H1 (cell line): ENCODE measurements at regions of chr19 and their contacts with region 1.

Region 1: DNA sequence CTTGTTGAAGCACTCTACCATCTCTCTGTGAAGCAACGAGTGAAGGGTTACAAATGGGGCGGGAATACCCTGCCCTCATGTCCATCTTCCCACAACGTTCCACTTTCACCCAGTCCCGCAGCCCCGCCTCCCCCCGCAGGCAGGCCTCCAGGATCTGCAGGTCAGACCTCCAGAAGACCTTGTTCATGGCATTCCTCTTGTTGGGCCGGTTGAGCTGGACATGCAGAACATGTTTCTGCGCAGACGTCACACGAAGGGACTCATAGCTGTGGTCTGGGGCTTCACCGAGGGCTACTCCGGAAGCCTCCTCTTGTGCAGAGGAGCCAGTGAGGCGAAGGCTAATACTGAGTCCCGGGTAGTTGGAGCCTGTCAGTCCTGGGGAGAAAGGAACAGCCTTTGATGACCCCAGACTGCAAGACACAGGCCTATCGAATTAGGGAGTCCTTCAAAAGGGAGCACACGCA is 420 bp downstream of the ECH1 start:
- DNase-seq: no peak
- H3K4me3 ChIP-seq: peak overlapping the region; percentile 73 to 85 (median 82)
- H3K27ac ChIP-seq: peak overlapping the region; percentile 68; the same call in 1 of the 2 replicates
- H3K4me1 ChIP-seq: peaks cover 0 to 6% (median 1%) of the 10 kb centered on the region in 4 experiments; a peak in 1 of 7 replicates
- H3K27me3 ChIP-seq: no peaks in the 10 kb centered on the region
- CTCF ChIP-seq: no peak
- EP300 ChIP-seq: no peak
- POLR2A ChIP-seq: no peak; a peak in 1 of 3 replicates
- RAD21 ChIP-seq: no peak

Region 2: DNA sequence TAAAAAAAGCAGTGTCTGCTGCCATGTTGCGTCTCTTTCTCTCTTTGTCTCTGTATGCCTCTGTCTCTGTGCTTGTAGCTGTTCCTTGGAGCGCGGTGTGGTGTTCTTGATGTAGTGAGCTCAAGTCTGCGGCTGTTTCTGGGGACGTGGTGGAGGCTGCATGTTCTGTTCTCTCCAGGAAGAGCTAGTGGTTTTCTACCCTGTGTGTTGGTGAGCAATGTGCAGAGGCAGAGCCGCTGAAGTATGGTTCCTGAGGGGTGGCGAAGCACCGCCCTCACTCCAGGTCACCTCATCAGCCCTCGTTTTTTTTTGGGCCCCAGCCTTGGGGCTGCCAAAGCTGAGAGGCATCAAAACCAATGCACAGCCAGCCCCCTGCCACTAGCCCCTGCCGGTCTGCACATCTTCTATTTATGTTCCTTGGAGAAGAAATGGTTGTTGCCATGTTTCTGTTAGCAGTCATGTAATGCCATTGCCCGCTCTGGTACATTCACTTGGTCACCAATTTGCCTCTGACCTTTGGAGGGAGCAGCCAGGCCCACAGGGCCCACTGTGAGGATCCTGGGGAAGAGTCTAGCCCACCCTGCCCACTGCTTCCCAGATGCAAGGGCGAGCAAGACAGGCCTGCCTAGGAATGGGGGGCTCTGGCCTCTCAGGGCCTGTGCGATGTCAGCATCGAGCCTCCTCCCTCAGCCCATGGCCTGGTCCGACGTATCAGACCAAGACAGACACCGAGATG is 11.4 kb after region 1 on chr19:
- CTCF ChIA-PET with region 1: interaction called, 5 read pairs
- POLR2A ChIA-PET with region 1: interaction called, 376 read pairs
- DNase-seq: no peak
- H3K4me3 ChIP-seq: no peak overlapping the region
- H3K27ac ChIP-seq: no peak overlapping the region
- H3K4me1 ChIP-seq: peaks cover 0 to 3% (median 0%) of the 10 kb centered on the region in 4 experiments; a peak in 1 of 7 replicates
- H3K27me3 ChIP-seq: no peaks in the 10 kb centered on the region; a peak in 1 of 7 replicates
- CTCF ChIP-seq: no peak
- EP300 ChIP-seq: no peak
- POLR2A ChIP-seq: peak in 1 of 2 experiments; percentile 24; a peak in 1 of 3 replicates
- RAD21 ChIP-seq: no peak

Region 3: DNA sequence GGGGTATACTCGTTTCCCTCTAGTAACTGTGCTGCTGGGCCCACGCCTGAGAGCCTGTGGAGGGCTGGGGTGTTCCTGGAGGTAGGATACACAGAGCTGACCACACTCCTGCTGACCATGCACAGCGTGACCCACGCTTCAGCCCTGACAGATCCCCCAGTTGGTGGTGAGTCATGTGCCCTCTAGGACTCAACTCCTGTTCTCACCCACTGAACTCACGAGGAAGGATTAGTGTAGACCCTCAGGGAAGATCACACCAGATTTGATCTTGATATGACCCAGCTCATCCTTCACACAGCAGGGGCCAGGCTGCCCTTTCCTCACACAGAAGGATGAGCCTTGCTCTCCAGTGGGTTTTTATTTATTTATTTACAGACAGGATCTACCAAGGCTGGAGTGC is 239.7 kb after region 1 on chr19:
- CTCF ChIA-PET with region 1: no interaction called
- POLR2A ChIA-PET with region 1: no interaction called
- DNase-seq: no peak
- H3K4me3 ChIP-seq: no peak overlapping the region
- H3K27ac ChIP-seq: no peak overlapping the region
- H3K4me1 ChIP-seq: no peaks in the 10 kb centered on the region
- H3K27me3 ChIP-seq: no peaks in the 10 kb centered on the region
- CTCF ChIP-seq: no peak
- EP300 ChIP-seq: no peak
- POLR2A ChIP-seq: no peak
- RAD21 ChIP-seq: no peak